HCT116 (cell line): ENCODE measurements at regions of chr3 and their contacts with region 1.

Region 1: GRCh38 chr3:9946112-9947024 is 5.8 kb downstream of the PRRT3 start:
- DNase-seq: peak; percentile 80
- ATAC-seq: peak; percentile 75
- H3K4me3 ChIP-seq: peak overlapping the region; percentile 66 to 84
- H3K27ac ChIP-seq: peak overlapping the region; percentile 98
- H3K4me1 ChIP-seq: peaks cover 7 to 28% of the 10 kb centered on the region in 2 experiments; a peak in 3 of 4 replicates
- H3K27me3 ChIP-seq: no peaks in the 10 kb centered on the region
- CTCF ChIP-seq: peak in 2 of 3 experiments; percentile 59 to 89; a peak in 4 of 6 replicates
- POLR2A ChIP-seq: peak; percentile 92
- RAD21 ChIP-seq: no peak

Region 2: DNA sequence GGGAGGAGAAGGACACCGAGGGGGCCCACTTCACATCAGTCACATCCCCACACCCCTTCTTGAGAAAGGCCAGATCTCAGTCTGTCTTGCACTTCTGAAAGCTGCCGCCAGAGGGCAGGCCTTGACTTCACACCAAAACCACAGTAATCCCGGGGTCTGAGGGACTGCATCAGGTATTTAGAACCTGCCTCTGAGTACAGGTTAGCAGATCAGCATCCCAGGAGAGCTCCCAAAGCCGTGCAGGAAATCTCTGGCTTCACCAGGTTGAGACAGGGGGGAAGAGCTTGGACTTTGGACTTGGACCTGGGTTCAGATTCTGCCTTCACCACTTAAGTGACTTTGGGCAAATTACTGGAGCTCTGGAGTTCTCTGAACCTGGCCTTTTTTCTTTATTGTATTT is 443.1 kb before region 1 on chr3:
- CTCF ChIA-PET with region 1: interaction called, 5 read pairs
- POLR2A ChIA-PET with region 1: no interaction called
- RAD21 ChIA-PET with region 1: no interaction called
- intact Hi-C with region 1: loop called (anchors 5 kb)
- DNase-seq: peak; percentile 71
- ATAC-seq: peak; percentile 67
- H3K4me3 ChIP-seq: no peak overlapping the region
- H3K27ac ChIP-seq: no peak overlapping the region
- H3K4me1 ChIP-seq: peaks cover 15 to 27% of the 10 kb centered on the region in 2 experiments
- H3K27me3 ChIP-seq: no peaks in the 10 kb centered on the region
- CTCF ChIP-seq: peak; percentile 77 to 96 (median 93)
- POLR2A ChIP-seq: no peak
- RAD21 ChIP-seq: peak; percentile 93

Region 3: DNA sequence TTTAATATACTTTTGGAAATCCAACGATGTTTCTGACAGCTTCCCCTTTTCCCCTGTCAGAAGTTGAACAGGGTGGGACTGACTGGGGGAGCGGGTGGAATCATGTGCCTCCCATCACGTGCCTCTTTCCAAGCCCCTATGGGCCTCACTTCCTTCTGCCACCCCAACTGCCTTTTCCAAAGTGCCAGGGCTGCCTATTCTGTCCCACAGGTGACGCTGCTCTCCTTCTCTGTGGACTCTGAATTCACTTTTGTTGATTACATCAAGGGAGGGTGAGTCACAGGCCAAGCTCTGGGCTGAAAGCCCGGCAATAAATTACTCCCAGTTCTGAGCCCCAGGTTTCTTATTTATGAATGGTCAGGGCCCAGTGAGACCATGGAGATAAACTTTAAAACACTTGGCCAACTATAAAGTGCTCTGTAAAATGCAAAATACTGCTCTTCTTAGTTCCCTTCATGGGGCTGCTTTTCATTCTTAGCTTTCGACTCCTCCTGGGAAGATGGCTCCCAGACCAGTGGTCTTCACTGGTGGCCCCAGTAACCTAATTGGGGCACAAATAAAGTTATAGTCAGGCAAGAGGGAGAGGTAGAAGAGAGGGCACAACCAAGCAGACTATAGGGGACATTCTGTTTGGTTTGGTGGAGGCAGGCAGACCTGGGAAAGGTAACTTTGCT is 230.5 kb before region 1 on chr3:
- CTCF ChIA-PET with region 1: interaction called, 7 read pairs
- POLR2A ChIA-PET with region 1: no interaction called
- RAD21 ChIA-PET with region 1: interaction called in 1 of 2 experiments, 4 read pairs
- intact Hi-C with region 1: loop called (anchors 5 kb)
- DNase-seq: peak; percentile 81
- ATAC-seq: peak; percentile 98
- H3K4me3 ChIP-seq: no peak overlapping the region
- H3K27ac ChIP-seq: peak overlapping the region; percentile 9; the same call in 1 of the 2 replicates
- H3K4me1 ChIP-seq: peaks cover 10 to 14% of the 10 kb centered on the region in 2 experiments
- H3K27me3 ChIP-seq: peaks cover 3% of the 10 kb centered on the region; the same call in 1 of the 2 replicates
- CTCF ChIP-seq: peak; percentile 89 to 94 (median 94)
- POLR2A ChIP-seq: no peak
- RAD21 ChIP-seq: peak; percentile 99

Region 4: DNA sequence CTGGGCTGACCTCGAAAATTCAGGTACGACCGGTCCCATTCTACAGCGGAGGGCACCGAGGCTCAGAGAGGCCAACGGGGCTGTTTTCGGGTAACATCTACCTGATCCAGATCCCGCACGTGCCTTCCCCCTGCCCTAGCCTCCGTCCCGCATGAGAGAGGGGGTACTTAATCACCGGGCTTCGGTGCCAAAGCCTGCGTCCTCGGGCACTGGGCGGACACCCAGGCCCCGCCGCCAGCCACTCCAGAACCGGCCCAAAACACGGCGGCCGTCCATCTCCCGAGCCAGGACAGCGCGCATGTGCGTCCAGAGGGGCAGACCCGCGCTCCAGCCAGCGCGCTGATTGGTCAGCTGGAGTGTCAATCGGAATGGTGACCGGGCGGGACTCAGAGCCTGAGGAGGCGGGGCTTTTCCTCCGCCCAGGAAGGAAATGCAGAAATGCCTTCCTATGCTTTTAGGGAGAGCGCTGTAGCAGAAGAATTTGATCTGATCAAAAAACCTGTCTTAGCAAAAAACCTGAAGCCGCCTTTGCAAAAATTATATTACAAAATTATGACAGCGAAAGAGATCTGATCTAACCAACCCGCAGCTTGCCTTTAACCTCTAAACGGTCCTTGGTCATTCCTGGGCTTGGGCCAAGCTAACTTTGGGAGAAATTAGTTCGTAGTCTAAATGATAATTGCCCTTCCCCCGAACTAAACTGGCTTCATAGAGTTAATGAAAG is 102.5 kb before region 1 on chr3 and contains the start of gene RPUSD3:
- CTCF ChIA-PET with region 1: interaction called, 13 read pairs
- POLR2A ChIA-PET with region 1: interaction called, 3 read pairs
- RAD21 ChIA-PET with region 1: interaction called, 4 to 6 read pairs
- intact Hi-C with region 1: loop called (anchors 2 kb)
- DNase-seq: peak; percentile 85
- ATAC-seq: peak; percentile 97
- H3K4me3 ChIP-seq: peak within 1 kb of the TSS; percentile 66 to 84
- H3K27ac ChIP-seq: peak within 1 kb of the TSS; percentile 79
- H3K4me1 ChIP-seq: peaks cover 0 to 15% of the 10 kb centered on the region in 2 experiments; a peak in 1 of 4 replicates
- H3K27me3 ChIP-seq: no peaks in the 10 kb centered on the region
- CTCF ChIP-seq: no peak
- POLR2A ChIP-seq: peak; percentile 65
- RAD21 ChIP-seq: no peak
- total RNA-seq, gene RPUSD3: 58.0 TPM

Region 5: DNA sequence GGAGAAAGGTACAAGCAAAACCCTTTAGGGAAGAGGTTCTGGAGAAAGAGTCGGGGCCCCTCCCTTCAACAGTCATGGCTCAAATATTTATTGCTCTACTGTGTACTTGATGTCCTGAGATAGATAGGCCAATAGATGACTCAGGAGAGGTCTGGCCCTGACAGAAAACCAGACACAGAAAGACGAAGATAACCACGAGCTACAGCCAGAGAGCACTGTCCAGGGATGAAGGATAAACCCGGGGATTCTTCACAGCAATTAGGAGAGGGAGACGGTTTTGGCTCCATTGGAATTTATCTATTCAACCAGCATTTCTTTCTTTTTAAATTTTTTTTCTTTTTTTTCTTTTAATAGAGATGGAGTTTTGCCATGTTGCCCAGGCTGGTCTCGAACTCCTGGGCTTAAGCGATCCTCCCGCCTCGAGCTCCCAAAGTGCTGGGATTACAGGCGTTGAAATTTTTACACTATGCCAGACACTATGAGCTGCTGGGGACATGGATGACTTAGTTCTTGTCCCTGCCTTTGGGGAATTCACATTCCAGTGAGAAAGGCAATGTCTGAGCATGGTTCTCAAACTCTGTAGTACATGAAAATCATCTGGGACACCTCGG is 61.7 kb before region 1 on chr3:
- CTCF ChIA-PET with region 1: interaction called, 10 read pairs
- POLR2A ChIA-PET with region 1: interaction called, 6 read pairs
- RAD21 ChIA-PET with region 1: no interaction called
- intact Hi-C with region 1: no loop called
- DNase-seq: peak; percentile 89
- ATAC-seq: peak; percentile 93
- H3K4me3 ChIP-seq: peak overlapping the region in 1 of 2 experiments; percentile 34; a peak in 2 of 4 replicates
- H3K27ac ChIP-seq: peak overlapping the region; percentile 82
- H3K4me1 ChIP-seq: peaks cover 17 to 31% of the 10 kb centered on the region in 2 experiments
- H3K27me3 ChIP-seq: no peaks in the 10 kb centered on the region
- CTCF ChIP-seq: peak in 1 of 3 experiments; percentile 4; a peak in 1 of 6 replicates
- POLR2A ChIP-seq: no peak
- RAD21 ChIP-seq: peak; percentile 28; the same call in 1 of the 2 replicates

Region 6: DNA sequence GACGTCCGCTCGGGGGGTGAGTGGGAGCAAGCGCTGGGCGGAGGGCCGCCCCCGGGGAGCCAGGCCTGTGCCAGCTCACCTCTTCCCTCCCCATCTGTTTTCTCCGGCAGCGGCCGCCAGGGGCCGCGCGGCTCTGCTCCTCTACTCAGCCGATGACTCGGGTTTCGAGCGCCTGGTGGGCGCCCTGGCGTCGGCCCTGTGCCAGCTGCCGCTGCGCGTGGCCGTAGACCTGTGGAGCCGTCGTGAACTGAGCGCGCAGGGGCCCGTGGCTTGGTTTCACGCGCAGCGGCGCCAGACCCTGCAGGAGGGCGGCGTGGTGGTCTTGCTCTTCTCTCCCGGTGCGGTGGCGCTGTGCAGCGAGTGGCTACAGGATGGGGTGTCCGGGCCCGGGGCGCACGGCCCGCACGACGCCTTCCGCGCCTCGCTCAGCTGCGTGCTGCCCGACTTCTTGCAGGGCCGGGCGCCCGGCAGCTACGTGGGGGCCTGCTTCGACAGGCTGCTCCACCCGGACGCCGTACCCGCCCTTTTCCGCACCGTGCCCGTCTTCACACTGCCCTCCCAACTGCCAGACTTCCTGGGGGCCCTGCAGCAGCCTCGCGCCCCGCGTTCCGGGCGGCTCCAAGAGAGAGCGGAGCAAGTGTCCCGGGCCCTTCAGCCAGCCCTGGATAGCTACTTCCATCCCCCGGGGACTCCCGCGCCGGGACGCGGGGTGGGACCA is 13.4 kb before region 1 on chr3:
- CTCF ChIA-PET with region 1: interaction called, 65 read pairs
- POLR2A ChIA-PET with region 1: interaction called, 27 read pairs
- RAD21 ChIA-PET with region 1: interaction called in 1 of 2 experiments, 6 read pairs
- intact Hi-C with region 1: no loop called
- DNase-seq: peak; percentile 43
- ATAC-seq: peak; percentile 74
- H3K4me3 ChIP-seq: peak overlapping the region; percentile 52 to 69
- H3K27ac ChIP-seq: peak overlapping the region; percentile 84
- H3K4me1 ChIP-seq: peaks cover 9 to 24% of the 10 kb centered on the region in 2 experiments
- H3K27me3 ChIP-seq: no peaks in the 10 kb centered on the region
- CTCF ChIP-seq: peak; percentile 64 to 76 (median 71)
- POLR2A ChIP-seq: no peak
- RAD21 ChIP-seq: peak; percentile 59

Region 7: GRCh38 chr3:9957214-9957613 is 10.8 kb after region 1 on chr3:
- CTCF ChIA-PET with region 1: interaction called, 22 read pairs
- POLR2A ChIA-PET with region 1: interaction called, 6 read pairs
- RAD21 ChIA-PET with region 1: interaction called in 1 of 2 experiments, 4 read pairs
- intact Hi-C with region 1: no loop called
- DNase-seq: no peak
- ATAC-seq: no peak
- H3K4me3 ChIP-seq: no peak overlapping the region
- H3K27ac ChIP-seq: no peak overlapping the region
- H3K4me1 ChIP-seq: peaks cover 12 to 25% of the 10 kb centered on the region in 2 experiments
- H3K27me3 ChIP-seq: no peaks in the 10 kb centered on the region
- CTCF ChIP-seq: peak in 1 of 3 experiments; percentile 20; a peak in 2 of 6 replicates
- POLR2A ChIP-seq: no peak
- RAD21 ChIP-seq: peak; percentile 23